HEK293 (cell line): ENCODE measurements at regions of chr6 and their contacts with region 1.

Region 1: DNA sequence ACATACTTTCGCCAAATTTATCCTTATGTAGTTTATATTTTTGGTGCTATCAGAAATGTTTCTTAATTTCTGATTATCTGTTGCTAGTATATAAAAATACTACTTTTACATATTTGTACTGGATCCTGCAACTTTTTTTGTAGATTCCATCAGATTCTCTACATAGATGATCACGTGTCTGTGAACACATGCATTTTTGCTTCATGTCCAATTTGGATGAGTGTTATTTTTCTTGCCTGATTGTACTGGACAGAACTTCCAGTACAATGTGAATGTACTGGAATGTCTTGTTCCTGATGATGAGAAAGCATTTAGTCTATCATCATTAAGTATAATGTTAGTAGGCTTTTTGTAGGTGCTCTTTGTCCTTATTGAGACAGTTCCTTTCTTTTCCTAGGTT is 25.0 kb upstream of the SSR1 start:
- H3K4me3 ChIP-seq: no peak overlapping the region
- H3K27ac ChIP-seq: no peak overlapping the region
- H3K4me1 ChIP-seq: no peaks in the 10 kb centered on the region
- CTCF ChIP-seq: no peak

Region 2: DNA sequence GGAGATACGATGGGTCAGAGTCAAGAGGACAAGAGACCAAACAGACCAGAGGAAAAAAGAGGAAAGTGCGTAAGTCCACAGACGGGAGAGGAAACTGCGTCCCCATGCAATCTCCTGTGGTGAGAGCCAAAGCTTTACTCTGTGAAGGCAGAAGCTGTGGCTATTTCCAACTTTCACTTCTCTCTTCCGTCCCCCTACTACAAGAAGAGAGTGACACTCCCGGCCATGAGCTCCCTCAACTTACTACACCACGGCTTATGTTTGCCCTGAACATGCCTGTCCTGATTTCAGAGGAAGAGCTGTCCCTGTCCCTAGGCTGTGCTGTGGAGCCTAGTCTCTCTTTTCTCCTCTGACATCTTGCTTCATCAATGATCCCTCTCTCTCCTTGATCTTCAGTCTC is 13.5 kb before region 1 on chr6:
- CTCF ChIA-PET with region 1: interaction called, 17 read pairs
- POLR2A ChIA-PET with region 1: no interaction called
- H3K4me3 ChIP-seq: no peak overlapping the region
- H3K27ac ChIP-seq: no peak overlapping the region
- H3K4me1 ChIP-seq: no peaks in the 10 kb centered on the region
- CTCF ChIP-seq: no peak

Region 3: DNA sequence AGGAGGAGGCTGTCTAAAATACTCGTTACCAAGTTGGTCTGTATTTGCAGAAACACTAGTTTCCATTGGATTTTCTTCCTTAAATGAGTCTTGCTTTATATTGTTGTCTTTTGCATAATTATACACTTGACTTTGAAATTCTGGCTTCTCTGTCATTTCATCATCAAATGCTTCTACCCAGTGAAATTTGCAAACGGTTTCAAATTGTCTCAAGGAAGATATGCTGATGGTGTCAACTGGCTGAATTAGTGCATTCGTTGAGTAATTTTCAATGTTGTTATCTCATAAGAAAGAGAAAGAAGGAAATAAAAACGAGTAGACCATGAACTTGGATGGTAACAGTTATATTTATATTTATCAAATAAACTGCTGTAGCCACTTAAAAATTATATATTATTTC is 40.7 kb after region 1 on chr6:
- CTCF ChIA-PET with region 1: no interaction called
- POLR2A ChIA-PET with region 1: no interaction called
- H3K4me3 ChIP-seq: no peak overlapping the region
- H3K27ac ChIP-seq: no peak overlapping the region
- H3K4me1 ChIP-seq: no peaks in the 10 kb centered on the region
- CTCF ChIP-seq: no peak

Region 4: GRCh38 chr6:7389451-7390225 is 51.6 kb after region 1 on chr6 and contains the starts of genes CAGE1 and RIOK1:
- CTCF ChIA-PET with region 1: interaction called, 3 read pairs
- POLR2A ChIA-PET with region 1: interaction called, 10 read pairs
- H3K4me3 ChIP-seq: peak within 1 kb of the TSS; percentile 70
- H3K27ac ChIP-seq: peak within 1 kb of the TSS; percentile 93
- H3K4me1 ChIP-seq: peaks cover 7% of the 10 kb centered on the region
- CTCF ChIP-seq: peak; percentile 85